Colonic mucosa (tissue), 4 donors: ENCODE measurements at regions of chrX and their contacts with region 1.

Region 1: GRCh38 chrX:11100281-11101035 is 10.7 kb upstream of the HCCS start:
- DNase-seq: peak; percentile 54
- H3K4me3 ChIP-seq: no peak overlapping the region
- H3K27ac ChIP-seq: peak overlapping the region; percentile 40
- H3K4me1 ChIP-seq: no peaks in the 10 kb centered on the region
- H3K27me3 ChIP-seq: no peaks in the 10 kb centered on the region
- CTCF ChIP-seq: peak; percentile 43

Region 2: GRCh38 chrX:10636337-10636736 is 464.1 kb before region 1 on chrX:
- intact Hi-C with region 1: loop called (anchors 10 kb)
- DNase-seq: peak; percentile 25
- H3K4me3 ChIP-seq: no peak overlapping the region
- H3K27ac ChIP-seq: no peak overlapping the region
- H3K4me1 ChIP-seq: no peaks in the 10 kb centered on the region
- H3K27me3 ChIP-seq: no peaks in the 10 kb centered on the region
- CTCF ChIP-seq: peak; percentile 22